Sigmoid colon (tissue), 7 donors: ENCODE measurements at regions of chr18 and their contacts with region 1.

Region 1: DNA sequence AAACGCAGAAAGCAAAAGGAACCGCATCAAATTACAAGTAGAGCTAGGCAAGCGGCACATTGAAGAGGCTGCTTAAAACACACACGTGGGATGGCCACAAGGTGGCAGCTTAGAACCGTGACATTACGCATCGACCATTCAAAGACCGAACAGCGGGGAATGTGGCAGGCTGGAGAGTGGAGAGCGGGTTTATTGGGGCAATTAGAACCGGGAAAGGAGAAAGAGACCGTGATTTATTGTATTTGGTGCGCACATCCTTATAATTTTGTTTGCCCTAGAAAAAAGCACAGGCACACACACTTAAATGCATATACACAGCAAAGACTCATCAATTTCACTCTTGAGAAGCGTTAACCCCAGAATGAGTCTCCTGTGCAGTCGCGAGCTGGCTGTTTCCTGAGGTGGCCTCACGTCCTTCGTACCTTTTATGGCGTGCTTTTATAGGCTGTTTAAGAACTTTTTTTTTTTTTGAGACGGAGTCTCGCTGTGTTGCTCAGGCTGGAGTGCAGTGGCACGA is 31.7 kb upstream of the MEP1B start:
- DNase-seq: peak; percentile 87
- H3K4me3 ChIP-seq: peak overlapping the region; percentile 6 to 42 (median 34)
- H3K27ac ChIP-seq: no peak overlapping the region
- H3K4me1 ChIP-seq: peaks cover 0 to 10% (median 2%) of the 10 kb centered on the region in 4 donors
- H3K27me3 ChIP-seq: no peaks in the 10 kb centered on the region
- CTCF ChIP-seq: peak; percentile 71 to 84 (median 82)
- EP300 ChIP-seq: no peak
- POLR2A ChIP-seq: no peak

Region 2: DNA sequence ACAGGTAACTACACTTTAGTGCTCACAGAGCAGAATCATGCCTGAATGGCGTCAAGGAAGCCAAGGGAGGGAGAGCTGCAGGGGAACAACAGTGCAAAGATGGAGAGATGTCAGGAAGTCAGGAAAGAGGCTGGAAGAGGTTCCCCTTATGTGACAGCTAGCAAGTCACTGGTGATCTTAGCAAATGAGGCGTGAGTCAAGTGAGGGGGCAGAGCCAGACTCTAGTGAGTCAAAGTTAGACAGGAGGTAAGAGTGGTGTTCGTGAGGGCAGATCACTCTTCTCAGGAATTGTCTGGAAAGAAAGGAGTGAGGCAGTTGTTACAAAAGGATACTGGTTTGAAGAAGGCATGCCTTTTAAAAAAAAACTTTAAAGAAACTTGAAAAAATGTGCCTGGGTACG is 118.7 kb after region 1 on chr18:
- intact Hi-C with region 1: loop called (anchors 5 kb)
- DNase-seq: no peak
- H3K4me3 ChIP-seq: no peak overlapping the region
- H3K27ac ChIP-seq: no peak overlapping the region
- H3K4me1 ChIP-seq: peaks cover 0 to 16% (median 12%) of the 10 kb centered on the region in 4 donors
- H3K27me3 ChIP-seq: no peaks in the 10 kb centered on the region
- CTCF ChIP-seq: no peak
- EP300 ChIP-seq: no peak
- POLR2A ChIP-seq: no peak

Region 3: DNA sequence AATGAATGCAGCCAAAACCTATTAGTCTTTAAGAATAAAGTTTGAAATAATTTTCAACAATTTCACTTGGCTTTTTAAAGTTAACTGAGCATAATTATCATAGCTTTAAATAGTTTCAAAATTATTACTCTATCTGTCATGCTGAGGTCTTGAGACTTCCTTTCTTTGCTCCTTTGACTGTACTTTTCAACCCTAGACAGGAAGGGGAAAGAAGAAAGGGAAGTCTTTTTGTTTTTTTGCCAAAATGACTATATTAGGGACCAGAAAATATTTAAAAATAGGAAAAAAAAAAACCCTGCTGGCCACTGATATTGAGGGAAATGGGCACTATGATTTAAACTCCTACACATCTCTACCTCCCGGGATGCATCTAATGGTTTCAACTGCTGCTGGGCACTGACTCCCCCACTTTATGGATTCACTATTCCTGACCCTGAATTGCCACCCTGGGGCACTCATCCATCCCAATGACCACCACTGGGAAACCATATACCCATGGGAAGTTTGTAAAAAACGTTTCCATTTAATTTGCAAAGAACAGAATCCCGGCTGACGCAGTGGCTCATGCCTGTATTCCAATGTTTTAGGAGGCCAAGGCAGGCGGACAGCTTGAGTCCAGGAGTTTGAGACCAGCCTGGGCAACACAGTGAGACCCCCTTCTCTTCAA is 262.1 kb after region 1 on chr18:
- intact Hi-C with region 1: no loop called
- DNase-seq: no peak
- H3K4me3 ChIP-seq: no peak overlapping the region
- H3K27ac ChIP-seq: no peak overlapping the region
- H3K4me1 ChIP-seq: peaks cover 0 to 48% (median 25%) of the 10 kb centered on the region in 4 donors
- H3K27me3 ChIP-seq: no peaks in the 10 kb centered on the region
- CTCF ChIP-seq: no peak
- EP300 ChIP-seq: no peak
- POLR2A ChIP-seq: no peak

Region 4: GRCh38 chr18:32552421-32553030 is 394.4 kb after region 1 on chr18:
- intact Hi-C with region 1: loop called (anchors 1 kb)
- DNase-seq: peak; percentile 68
- H3K4me3 ChIP-seq: no peak overlapping the region
- H3K27ac ChIP-seq: no peak overlapping the region
- H3K4me1 ChIP-seq: no peaks in the 10 kb centered on the region
- H3K27me3 ChIP-seq: no peaks in the 10 kb centered on the region
- CTCF ChIP-seq: peak; percentile 56 to 75 (median 66)
- EP300 ChIP-seq: no peak
- POLR2A ChIP-seq: no peak